ENCODE measurements at regions of chr14 and their contacts with region 1.

Region 1: DNA sequence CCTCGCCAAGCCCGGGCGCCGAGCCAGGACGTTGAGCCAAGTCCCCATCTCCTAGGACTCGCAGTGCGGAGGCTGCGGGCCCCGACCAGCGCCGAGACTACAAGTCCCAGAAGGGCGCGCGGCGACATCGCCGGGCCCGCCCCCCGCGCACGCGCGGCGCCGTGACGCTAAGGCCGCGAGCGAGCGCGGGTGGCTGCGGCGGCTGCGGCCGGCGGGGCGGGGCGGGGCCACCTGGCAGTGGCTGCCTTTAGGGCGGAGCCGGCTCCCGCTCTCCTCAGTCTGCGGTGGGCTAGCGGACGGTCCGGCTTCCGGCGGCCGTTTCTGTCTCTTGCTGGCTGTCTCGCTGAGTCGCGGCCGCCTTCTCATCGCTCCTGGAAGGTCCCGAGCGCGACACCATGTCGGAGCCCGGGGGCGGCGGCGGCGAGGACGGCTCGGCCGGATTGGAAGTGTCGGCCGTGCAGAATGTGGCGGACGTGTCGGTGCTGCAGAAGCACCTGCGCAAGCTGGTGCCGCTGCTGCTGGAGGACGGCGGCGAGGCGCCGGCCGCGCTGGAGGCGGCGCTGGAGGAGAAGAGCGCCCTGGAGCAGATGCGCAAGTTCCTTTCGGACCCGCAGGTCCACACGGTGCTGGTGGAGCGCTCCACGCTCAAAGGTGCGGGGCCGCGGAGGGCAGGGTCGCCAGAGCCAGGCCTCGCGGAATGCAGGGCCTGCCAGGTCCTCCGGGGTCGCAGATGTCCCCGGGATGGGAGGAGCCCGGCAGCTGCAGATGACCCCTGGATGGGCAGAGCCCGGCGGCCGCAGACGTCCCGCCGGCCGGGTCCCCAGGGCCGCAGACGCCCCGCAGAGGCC is at the start of gene DYNC1H1:
- DNase-seq: peak; percentile 77 to 96
- H3K4me3 ChIP-seq: peak within 1 kb of the TSS; percentile 100
- H3K27ac ChIP-seq: peak within 1 kb of the TSS; percentile 93 to 95
- H3K4me1 ChIP-seq: peaks cover 2 to 6% of the 10 kb centered on the region in 2 donors
- H3K27me3 ChIP-seq: no peaks in the 10 kb centered on the region
- CTCF ChIP-seq: no peak
- total RNA-seq, gene DYNC1H1: 577 TPM

Region 2: GRCh38 chr14:101947906-101948665 is 16.4 kb before region 1 on chr14:
- intact Hi-C with region 1: loop called (anchors 1 kb)
- DNase-seq: peak; percentile 100
- H3K4me3 ChIP-seq: peak overlapping the region; percentile 71 to 96
- H3K27ac ChIP-seq: peak overlapping the region; percentile 90 to 93
- H3K4me1 ChIP-seq: peaks cover 7 to 10% of the 10 kb centered on the region in 2 donors
- H3K27me3 ChIP-seq: no peaks in the 10 kb centered on the region
- CTCF ChIP-seq: no peak

Region 3: DNA sequence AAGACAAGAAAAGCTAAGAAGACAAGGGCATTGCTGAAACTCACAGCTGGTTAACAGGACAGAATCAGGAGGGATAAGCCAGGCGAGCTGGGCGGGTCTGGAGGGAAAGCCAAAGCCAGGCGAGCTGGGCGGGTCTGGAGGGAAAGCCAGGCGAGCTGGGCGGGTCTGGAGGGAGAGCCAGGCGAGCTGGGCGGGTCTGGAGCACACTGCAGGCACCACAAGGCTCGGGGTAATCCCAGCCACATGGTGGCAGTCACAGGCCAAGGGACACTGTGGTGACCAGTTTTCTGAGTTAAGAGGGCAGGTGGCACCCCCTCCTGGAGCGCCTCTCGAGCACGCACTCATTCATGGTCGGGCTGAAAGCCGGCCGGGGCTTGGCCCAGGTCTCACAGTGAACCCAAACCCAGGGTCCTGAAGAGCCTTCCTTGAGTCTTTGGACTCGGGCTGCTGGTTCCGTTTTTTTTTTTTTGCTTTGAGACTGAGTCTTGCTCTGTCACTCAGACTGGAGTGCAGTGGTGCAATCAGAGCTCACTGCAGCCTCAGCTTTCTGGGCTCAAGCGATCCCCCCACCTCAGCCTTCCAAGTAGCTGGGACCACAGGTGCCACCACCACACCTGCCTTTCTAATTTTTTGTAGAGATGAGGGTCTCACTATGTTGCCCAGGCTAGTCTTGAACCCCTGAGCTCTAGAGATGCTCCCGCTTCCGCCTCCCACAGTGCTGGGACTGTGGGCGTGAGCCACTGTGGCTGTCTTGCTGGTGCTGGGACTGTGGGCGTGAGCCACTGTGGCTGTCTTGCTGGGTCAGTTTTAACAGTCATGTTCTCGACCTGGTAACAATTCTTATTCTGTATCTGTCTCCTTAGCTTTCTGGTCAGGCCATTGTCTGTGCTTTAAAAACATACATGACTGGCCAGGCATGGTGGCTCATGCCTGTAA is 82.1 kb after region 1 on chr14:
- intact Hi-C with region 1: loop called (anchors 5 kb)
- DNase-seq: peak; percentile 41 to 90
- H3K4me3 ChIP-seq: no peak overlapping the region
- H3K27ac ChIP-seq: peak overlapping the region in 1 of 2 donors; percentile 47
- H3K4me1 ChIP-seq: peaks cover 0 to 3% of the 10 kb centered on the region in 2 donors
- H3K27me3 ChIP-seq: no peaks in the 10 kb centered on the region
- CTCF ChIP-seq: peak; percentile 54 to 68 (median 56)

Region 4: DNA sequence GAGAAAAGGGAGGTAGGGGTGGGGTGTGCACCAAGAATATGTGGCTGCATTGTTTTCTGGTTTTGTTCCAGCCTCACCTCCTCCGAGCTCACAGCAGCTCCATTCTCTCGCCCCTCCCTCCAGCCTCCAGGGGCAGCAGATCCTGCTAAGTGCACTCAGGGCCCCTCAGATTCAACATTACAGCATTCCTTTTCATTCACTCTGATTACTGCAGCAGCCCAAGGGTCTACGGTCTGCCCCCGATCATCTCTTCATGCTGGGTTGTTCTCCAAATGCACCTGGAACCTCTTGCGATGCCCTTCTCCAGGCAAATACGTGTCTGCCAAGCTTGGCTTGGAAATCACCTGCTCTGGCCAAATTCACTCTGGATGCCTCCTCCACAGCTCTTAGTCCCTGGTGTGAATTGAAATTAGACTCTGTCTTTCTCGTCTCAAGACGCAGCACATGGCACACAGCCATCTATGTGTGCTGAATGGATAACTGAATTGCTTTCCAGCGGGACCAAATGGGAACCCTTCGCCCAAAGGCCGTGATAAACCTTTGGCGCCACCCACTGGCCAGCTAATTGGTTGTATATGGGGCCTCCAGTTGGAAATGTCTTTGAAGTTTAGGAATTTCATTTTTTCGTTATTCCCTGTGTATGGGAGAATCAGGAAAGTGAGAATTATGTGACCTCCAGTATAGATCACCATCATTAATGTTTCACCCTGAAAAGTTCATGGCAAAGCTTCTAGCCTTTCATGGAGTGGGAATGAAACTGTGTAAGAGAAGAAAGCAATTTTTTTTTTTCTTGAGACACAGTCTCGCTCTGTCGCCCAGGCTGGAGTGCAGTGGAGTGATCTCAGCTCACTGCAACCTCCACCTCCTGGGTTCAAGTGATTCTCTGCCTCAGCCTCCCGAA is 131.9 kb after region 1 on chr14:
- intact Hi-C with region 1: loop called (anchors 2 kb)
- DNase-seq: peak in 1 of 2 donors; percentile 92
- H3K4me3 ChIP-seq: no peak overlapping the region
- H3K27ac ChIP-seq: no peak overlapping the region
- H3K4me1 ChIP-seq: no peaks in the 10 kb centered on the region
- H3K27me3 ChIP-seq: no peaks in the 10 kb centered on the region
- CTCF ChIP-seq: peak; percentile 67 to 81 (median 70)

Region 5: GRCh38 chr14:103333754-103334643 is 1369.5 kb after region 1 on chr14 and contains the start of gene EIF5:
- intact Hi-C with region 1: loop called (anchors 10 kb)
- DNase-seq: peak; percentile 93 to 100
- H3K4me3 ChIP-seq: peak within 1 kb of the TSS; percentile 96 to 97
- H3K27ac ChIP-seq: peak within 1 kb of the TSS; percentile 100
- H3K4me1 ChIP-seq: peaks cover 0 to 17% of the 10 kb centered on the region in 2 donors
- H3K27me3 ChIP-seq: no peaks in the 10 kb centered on the region
- CTCF ChIP-seq: peak; percentile 9 to 56 (median 22)
- total RNA-seq, gene EIF5: 85.5 TPM